ENCODE measurements at regions of chr10 and their contacts with region 1.

Region 1: GRCh38 chr10:101782811-101783735 is at the start of gene NPM3:
- DNase-seq: peak; percentile 47 to 89
- H3K4me3 ChIP-seq: peak within 1 kb of the TSS; percentile 73 to 83
- H3K27ac ChIP-seq: peak within 1 kb of the TSS; percentile 28 to 65
- H3K4me1 ChIP-seq: peaks cover 17 to 30% of the 10 kb centered on the region in 2 donors
- H3K27me3 ChIP-seq: no peaks in the 10 kb centered on the region
- CTCF ChIP-seq: no peak
- total RNA-seq, gene NPM3: 28.7 TPM

Region 2: GRCh38 chr10:101214446-101215396 is 568.4 kb before region 1 on chr10:
- intact Hi-C with region 1: loop called (anchors 5 kb)
- DNase-seq: no peak
- H3K4me3 ChIP-seq: peak overlapping the region in 1 of 2 donors; percentile 19
- H3K27ac ChIP-seq: no peak overlapping the region
- H3K4me1 ChIP-seq: peaks cover 7 to 22% of the 10 kb centered on the region in 2 donors
- H3K27me3 ChIP-seq: peaks cover 48% of the 10 kb centered on the region
- CTCF ChIP-seq: peak; percentile 60 to 90 (median 82)

Region 3: GRCh38 chr10:101602761-101603398 is 180.2 kb before region 1 on chr10:
- intact Hi-C with region 1: loop called (anchors 2 kb)
- DNase-seq: peak in 1 of 2 donors; percentile 72
- H3K4me3 ChIP-seq: no peak overlapping the region
- H3K27ac ChIP-seq: no peak overlapping the region
- H3K4me1 ChIP-seq: no peaks in the 10 kb centered on the region
- H3K27me3 ChIP-seq: no peaks in the 10 kb centered on the region
- CTCF ChIP-seq: peak; percentile 70 to 85 (median 78)

Region 4: DNA sequence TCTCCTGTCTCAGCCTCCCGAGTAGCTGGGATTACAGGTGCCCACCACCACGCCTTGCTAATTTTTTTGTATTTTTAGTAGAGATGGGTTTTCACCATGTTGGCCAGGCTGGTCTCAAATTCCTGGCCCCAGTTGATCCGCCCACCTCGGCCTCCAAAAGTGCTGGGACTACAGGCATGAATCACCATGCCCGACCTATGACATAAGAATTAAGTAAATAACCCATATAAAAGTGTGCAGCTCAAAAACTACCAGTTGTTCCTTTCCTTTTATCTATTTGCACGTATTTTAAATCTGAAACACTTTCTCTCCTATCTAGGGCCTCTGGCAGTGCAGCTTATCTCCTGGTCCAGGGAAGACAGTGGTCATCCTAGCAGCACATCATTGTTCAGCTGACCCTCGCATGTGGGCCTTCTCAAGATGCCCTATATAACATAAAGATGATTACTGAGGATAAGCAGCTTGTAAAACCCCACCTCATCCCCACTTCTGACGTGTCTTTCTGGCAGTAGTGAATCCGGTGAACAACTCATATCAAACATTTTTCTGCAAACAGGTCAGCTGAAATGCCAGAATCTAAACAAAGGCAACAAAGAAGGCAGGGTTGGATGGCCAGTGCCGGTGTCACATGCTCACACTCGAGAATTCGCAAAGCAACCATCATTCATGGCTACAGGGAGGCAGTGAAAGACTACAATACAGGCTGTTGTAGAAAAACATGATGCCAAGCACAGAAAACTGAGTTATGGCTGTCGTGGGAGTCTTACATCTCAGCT is 96.6 kb after region 1 on chr10:
- intact Hi-C with region 1: no loop called
- DNase-seq: no peak
- H3K4me3 ChIP-seq: no peak overlapping the region
- H3K27ac ChIP-seq: no peak overlapping the region
- H3K4me1 ChIP-seq: no peaks in the 10 kb centered on the region
- H3K27me3 ChIP-seq: no peaks in the 10 kb centered on the region
- CTCF ChIP-seq: no peak

Region 5: GRCh38 chr10:102009801-102010425 is 226.8 kb after region 1 on chr10:
- intact Hi-C with region 1: loop called (anchors 1 kb)
- DNase-seq: peak in 1 of 2 donors; percentile 71
- H3K4me3 ChIP-seq: no peak overlapping the region
- H3K27ac ChIP-seq: no peak overlapping the region
- H3K4me1 ChIP-seq: no peaks in the 10 kb centered on the region
- H3K27me3 ChIP-seq: no peaks in the 10 kb centered on the region
- CTCF ChIP-seq: peak; percentile 84 to 91 (median 86)

Measured in ascending aorta (tissue), 2 donors.